ENCODE measurements at regions of chrX and their contacts with region 1.

Region 1: DNA sequence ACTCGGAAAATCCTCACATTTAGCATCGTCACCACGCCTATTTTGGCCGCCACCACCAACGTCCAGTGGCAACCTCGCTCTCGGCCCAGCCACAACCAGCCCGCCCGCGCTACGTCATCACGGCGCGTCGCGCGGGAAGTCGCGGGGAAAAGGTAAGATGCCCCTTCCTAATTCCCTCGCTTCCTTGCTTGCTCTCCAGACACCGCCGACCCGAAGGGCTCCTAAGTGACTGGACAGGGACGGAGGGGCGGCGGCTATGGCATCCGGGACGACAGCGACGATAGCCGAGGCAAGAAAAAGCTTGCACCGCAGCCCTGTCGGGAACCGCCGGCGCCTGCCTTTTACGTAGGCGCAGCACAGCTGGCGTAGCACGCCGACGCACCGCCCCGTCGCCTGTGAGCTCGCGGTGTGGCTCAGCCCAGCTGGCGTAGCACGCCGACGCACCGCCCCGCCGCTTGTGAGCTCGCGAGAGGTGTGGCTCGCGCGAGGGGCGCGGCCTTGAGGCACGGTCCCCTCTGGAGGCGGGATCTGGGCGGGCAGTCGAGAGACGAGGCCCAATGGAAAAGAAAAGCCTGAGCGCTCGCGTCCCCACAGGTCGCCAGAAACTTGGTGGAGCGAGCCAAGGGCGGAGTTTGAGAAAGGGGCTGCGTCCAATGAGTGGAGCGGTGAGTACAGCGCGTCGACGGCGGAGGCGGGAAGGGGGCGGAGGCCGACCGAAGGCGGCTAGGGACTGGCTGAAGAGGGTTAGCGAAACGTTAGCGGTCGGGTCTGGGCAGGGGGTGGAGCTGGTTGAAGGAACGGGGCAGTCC is at the start of gene HDAC6:
- DNase-seq: peak; percentile 99
- H3K4me3 ChIP-seq: peak within 1 kb of the TSS; percentile 57 to 75 (median 58)
- H3K27ac ChIP-seq: peak within 1 kb of the TSS; percentile 87
- H3K4me1 ChIP-seq: peaks cover 4% of the 10 kb centered on the region
- H3K27me3 ChIP-seq: no peaks in the 10 kb centered on the region
- CTCF ChIP-seq: no peak
- POLR2A ChIP-seq: no peak
- total RNA-seq, gene HDAC6: 58.4 and 65.7 TPM in 2 replicates

Region 2: GRCh38 chrX:48696301-48697181 is 104.9 kb before region 1 on chrX and contains the start of gene SUV39H1:
- CTCF ChIA-PET with region 1: no interaction called
- POLR2A ChIA-PET with region 1: no interaction called
- dilution Hi-C with region 1: no loop called
- intact Hi-C with region 1: loop called (anchors 2 kb)
- DNase-seq: peak; percentile 87
- H3K4me3 ChIP-seq: peak within 1 kb of the TSS; percentile 60 to 76 (median 72)
- H3K27ac ChIP-seq: peak within 1 kb of the TSS; percentile 57
- H3K4me1 ChIP-seq: peaks cover 5% of the 10 kb centered on the region
- H3K27me3 ChIP-seq: no peaks in the 10 kb centered on the region
- CTCF ChIP-seq: no peak
- POLR2A ChIP-seq: peak; percentile 80
- total RNA-seq, gene SUV39H1: 18.2 and 20.0 TPM in 2 replicates

Region 3: GRCh38 chrX:48737213-48737938 is 64.1 kb before region 1 on chrX:
- CTCF ChIA-PET with region 1: no interaction called
- POLR2A ChIA-PET with region 1: interaction called, 5 read pairs
- dilution Hi-C with region 1: no loop called
- intact Hi-C with region 1: loop called (anchors 1 kb)
- DNase-seq: peak; percentile 95
- H3K4me3 ChIP-seq: peak overlapping the region; percentile 11 to 58 (median 45)
- H3K27ac ChIP-seq: peak overlapping the region; percentile 64
- H3K4me1 ChIP-seq: peaks cover 3% of the 10 kb centered on the region
- H3K27me3 ChIP-seq: no peaks in the 10 kb centered on the region
- CTCF ChIP-seq: no peak
- POLR2A ChIP-seq: peak; percentile 75

Region 4: DNA sequence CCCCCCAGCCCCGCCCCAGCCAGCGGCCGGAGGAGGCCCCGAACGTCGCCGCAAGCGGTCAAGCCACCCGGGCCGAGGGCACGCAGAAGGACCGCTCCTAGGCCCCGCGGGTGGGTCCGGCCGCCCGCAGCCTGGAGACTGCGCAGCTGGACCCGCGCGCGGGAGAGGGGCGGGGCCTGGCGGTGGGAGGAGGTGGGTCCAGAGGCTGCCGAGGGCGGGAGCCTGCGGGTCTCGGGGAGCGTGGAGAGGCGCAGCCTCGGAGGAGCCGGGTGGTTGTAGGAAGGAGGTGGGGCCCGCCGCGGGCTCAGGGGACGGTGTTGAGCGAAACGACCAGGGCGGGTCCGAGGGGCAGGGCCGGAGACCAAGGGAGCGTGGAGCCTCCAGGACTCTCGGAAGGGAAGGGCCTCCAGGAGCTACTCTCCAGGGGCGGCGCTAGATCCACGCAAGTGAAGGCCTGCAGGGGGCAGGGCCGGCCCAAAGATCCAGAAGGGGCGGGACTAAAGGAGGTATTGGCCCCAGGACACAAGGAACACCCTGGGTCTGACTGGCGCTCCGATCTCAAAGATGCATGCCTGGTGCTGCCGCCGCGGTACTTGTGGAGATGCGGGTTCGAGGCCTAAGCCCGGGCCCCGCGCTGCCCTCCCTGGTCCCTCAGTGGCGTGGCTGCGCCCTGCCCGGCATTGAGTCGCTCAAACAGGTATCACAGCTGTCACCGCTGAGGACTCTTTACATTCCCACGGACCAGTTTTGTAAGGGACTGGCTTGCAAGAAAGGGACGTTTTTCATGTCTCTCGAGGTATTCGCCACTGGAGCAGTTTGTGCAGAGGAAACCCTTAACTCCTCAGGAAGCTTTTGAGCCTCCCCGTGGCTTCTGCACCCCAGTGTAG is 90.2 kb after region 1 on chrX:
- CTCF ChIA-PET with region 1: interaction called, 3 read pairs
- POLR2A ChIA-PET with region 1: no interaction called
- dilution Hi-C with region 1: no loop called
- intact Hi-C with region 1: loop called (anchors 2 kb)
- DNase-seq: peak; percentile 80
- H3K4me3 ChIP-seq: peak overlapping the region; percentile 15 to 58 (median 46)
- H3K27ac ChIP-seq: no peak overlapping the region
- H3K4me1 ChIP-seq: peaks cover 7% of the 10 kb centered on the region
- H3K27me3 ChIP-seq: no peaks in the 10 kb centered on the region
- CTCF ChIP-seq: peak; percentile 29 to 59
- POLR2A ChIP-seq: no peak

Region 5: GRCh38 chrX:48911412-48912182 is 110.1 kb after region 1 on chrX and contains the start of gene SLC35A2:
- CTCF ChIA-PET with region 1: no interaction called
- POLR2A ChIA-PET with region 1: no interaction called
- dilution Hi-C with region 1: no loop called
- intact Hi-C with region 1: loop called (anchors 2 kb)
- DNase-seq: peak; percentile 75
- H3K4me3 ChIP-seq: peak within 1 kb of the TSS; percentile 45 to 92 (median 78)
- H3K27ac ChIP-seq: peak within 1 kb of the TSS; percentile 49
- H3K4me1 ChIP-seq: peaks cover 9% of the 10 kb centered on the region
- H3K27me3 ChIP-seq: no peaks in the 10 kb centered on the region
- CTCF ChIP-seq: no peak
- POLR2A ChIP-seq: peak; percentile 59
- total RNA-seq, gene SLC35A2: 28.9 and 31.4 TPM in 2 replicates

Region 6: DNA sequence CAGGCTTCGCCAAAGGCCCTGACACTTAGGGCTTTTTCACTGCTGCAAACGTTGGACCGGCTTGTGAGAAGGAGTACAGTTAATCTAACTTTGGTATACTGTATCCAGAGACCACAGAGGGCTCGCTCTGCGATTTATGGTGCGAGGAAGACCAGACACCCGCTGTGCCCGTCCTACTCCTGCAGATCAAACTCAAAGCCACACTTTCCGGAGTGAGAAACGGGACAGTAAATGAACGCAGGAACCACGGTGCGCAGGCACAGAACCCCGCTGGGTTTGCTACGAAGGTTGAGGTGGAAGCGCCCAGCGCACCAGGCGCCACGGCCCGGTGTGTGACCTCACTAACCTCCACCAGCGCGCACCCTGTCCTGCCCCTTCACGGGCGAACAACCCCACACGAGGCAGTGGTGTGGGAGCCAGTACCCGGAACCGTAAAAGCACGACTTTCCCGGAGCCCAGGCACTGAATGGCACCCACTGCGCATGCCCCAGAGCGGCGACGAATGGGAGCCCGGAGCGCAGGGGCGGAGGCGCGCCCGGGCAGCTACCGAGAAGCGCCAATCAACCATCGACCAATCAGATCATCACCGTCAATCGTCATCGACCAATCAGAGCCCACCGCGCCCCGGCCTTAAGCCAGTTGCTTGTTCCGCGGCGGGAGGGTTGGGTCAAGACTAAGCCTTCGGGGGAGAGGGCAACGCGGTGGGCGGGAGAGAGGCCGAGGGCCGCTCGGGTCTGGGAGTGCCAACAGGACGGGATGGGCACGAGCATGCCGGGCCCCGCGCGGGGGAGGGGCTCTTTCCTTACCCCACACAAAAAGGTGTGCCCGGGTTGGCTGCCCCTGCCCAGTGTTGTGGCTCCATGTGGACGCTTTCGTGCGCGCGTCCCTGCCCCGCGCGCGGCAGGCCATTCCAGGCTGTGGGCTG is 299.5 kb after region 1 on chrX:
- CTCF ChIA-PET with region 1: no interaction called
- POLR2A ChIA-PET with region 1: no interaction called
- dilution Hi-C with region 1: no loop called
- intact Hi-C with region 1: no loop called
- DNase-seq: peak; percentile 94
- H3K4me3 ChIP-seq: peak overlapping the region; percentile 35 to 54 (median 50)
- H3K27ac ChIP-seq: no peak overlapping the region
- H3K4me1 ChIP-seq: no peaks in the 10 kb centered on the region
- H3K27me3 ChIP-seq: no peaks in the 10 kb centered on the region
- CTCF ChIP-seq: no peak
- POLR2A ChIP-seq: peak; percentile 39

Region 7: GRCh38 chrX:49120099-49120498 is 318.6 kb after region 1 on chrX:
- CTCF ChIA-PET with region 1: no interaction called
- POLR2A ChIA-PET with region 1: no interaction called
- dilution Hi-C with region 1: no loop called
- intact Hi-C with region 1: loop called (anchors 1 kb)
- DNase-seq: no peak
- H3K4me3 ChIP-seq: no peak overlapping the region
- H3K27ac ChIP-seq: no peak overlapping the region
- H3K4me1 ChIP-seq: peaks cover 5% of the 10 kb centered on the region
- H3K27me3 ChIP-seq: no peaks in the 10 kb centered on the region
- CTCF ChIP-seq: no peak
- POLR2A ChIP-seq: no peak